T-cell (primary cell): ENCODE measurements at regions of chr19 and their contacts with region 1.

Region 1: DNA sequence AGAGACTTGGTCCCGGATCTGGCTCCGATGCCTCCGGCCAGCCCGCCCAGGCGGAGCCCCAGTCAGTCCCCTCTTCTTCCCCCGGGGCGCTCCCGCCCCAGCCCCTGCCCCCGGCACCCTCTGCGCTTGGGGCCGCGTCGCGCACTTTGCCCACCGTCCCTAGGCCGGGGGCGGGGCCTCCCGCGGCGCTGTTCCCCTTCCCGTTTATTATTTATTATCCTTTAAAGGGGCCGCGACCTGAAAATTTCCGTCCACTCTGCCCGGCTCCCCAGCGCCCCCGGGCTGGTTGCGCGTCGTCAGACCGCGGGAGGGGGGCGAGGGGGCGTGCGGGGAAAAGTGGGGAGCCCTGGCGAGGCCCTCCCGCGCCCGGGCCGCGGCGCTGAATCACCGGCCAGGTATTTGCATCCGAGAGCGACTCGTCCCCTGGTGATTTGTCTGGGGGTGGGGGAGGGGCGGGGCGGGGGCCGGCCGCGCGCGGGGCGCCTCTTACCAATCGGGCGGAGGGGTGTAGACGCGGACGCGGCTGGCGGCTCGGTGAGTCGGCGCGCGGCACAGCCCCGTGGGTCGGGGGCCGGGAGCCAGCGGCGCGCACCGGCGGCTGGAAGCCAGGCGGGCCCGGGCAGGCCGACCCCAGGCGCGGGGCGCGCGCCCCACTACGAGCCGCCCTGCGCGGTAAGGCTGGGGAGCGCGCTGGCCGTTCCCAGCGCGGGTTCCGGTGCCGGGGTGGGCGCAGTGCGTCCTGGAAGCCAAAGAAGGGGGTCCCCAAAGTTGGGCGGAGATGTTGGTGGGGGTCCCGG is at the start of gene ARID3A:
- DNase-seq: peak in 32 of 35 experiments; percentile 49 to 83 (median 65)
- ATAC-seq: peak; percentile 73 to 78 (median 77)
- H3K4me3 ChIP-seq: peak within 1 kb of the TSS; percentile 81 to 82
- H3K4me3 Mint-ChIP-seq: peak within 1 kb of the TSS; percentile 74 to 78 (median 78)
- H3K27ac ChIP-seq: peak within 1 kb of the TSS; percentile 65
- H3K27ac Mint-ChIP-seq: peak within 1 kb of the TSS; percentile 39 to 66
- H3K4me1 ChIP-seq: peaks cover 0 to 48% of the 10 kb centered on the region in 2 experiments
- H3K4me1 Mint-ChIP-seq: peaks cover 14 to 17% (median 17%) of the 10 kb centered on the region in 3 donors
- H3K27me3 ChIP-seq: no peaks in the 10 kb centered on the region
- H3K27me3 Mint-ChIP-seq: no peaks in the 10 kb centered on the region
- total RNA-seq, gene ARID3A: 9.8 to 13.2 (median 12.0) TPM

Region 2: GRCh38 chr19:892243-893050 is 33.3 kb before region 1 on chr19:
- CTCF ChIA-PET with region 1: no interaction called
- POLR2A ChIA-PET with region 1: no interaction called
- DNase-seq: peak in 3 of 35 experiments; percentile 14 to 39 (median 21)
- ATAC-seq: peak; percentile 41 to 66 (median 48)
- H3K4me3 ChIP-seq: peak overlapping the region; percentile 64 to 75
- H3K4me3 Mint-ChIP-seq: peak overlapping the region; percentile 78 to 87 (median 85)
- H3K27ac ChIP-seq: peak overlapping the region; percentile 67
- H3K27ac Mint-ChIP-seq: peak overlapping the region; percentile 79 to 100
- H3K4me1 ChIP-seq: peaks cover 0 to 53% of the 10 kb centered on the region in 2 experiments
- H3K4me1 Mint-ChIP-seq: peaks cover 14 to 54% (median 23%) of the 10 kb centered on the region in 3 donors
- H3K27me3 ChIP-seq: no peaks in the 10 kb centered on the region
- H3K27me3 Mint-ChIP-seq: peaks cover 0 to 4% of the 10 kb centered on the region in 2 donors

Region 3: GRCh38 chr19:913080-913748 is 12.5 kb before region 1 on chr19 and contains the start of gene R3HDM4:
- CTCF ChIA-PET with region 1: no interaction called
- POLR2A ChIA-PET with region 1: no interaction called
- DNase-seq: peak; percentile 66 to 91 (median 81)
- ATAC-seq: peak; percentile 58 to 63 (median 62)
- H3K4me3 ChIP-seq: peak within 1 kb of the TSS; percentile 75 to 97
- H3K4me3 Mint-ChIP-seq: peak within 1 kb of the TSS; percentile 79 to 85 (median 84)
- H3K27ac ChIP-seq: peak within 1 kb of the TSS; percentile 99
- H3K27ac Mint-ChIP-seq: peak within 1 kb of the TSS; percentile 95
- H3K4me1 ChIP-seq: peaks cover 26 to 72% of the 10 kb centered on the region in 2 experiments
- H3K4me1 Mint-ChIP-seq: peaks cover 28 to 41% (median 36%) of the 10 kb centered on the region in 3 donors
- H3K27me3 ChIP-seq: peaks cover 0 to 30% of the 10 kb centered on the region in 2 experiments
- H3K27me3 Mint-ChIP-seq: peaks cover 0 to 5% of the 10 kb centered on the region in 2 donors
- total RNA-seq, gene R3HDM4: 190 to 252 (median 220) TPM

Region 4: GRCh38 chr19:947265-948036 is 21.7 kb after region 1 on chr19:
- CTCF ChIA-PET with region 1: interaction called in 1 of 2 experiments, 11 read pairs
- POLR2A ChIA-PET with region 1: no interaction called
- DNase-seq: peak in 6 of 35 experiments; percentile 8 to 60 (median 22)
- ATAC-seq: peak in 1 of 4 experiments; percentile 46
- H3K4me3 ChIP-seq: no peak overlapping the region
- H3K4me3 Mint-ChIP-seq: no peak overlapping the region
- H3K27ac ChIP-seq: no peak overlapping the region
- H3K27ac Mint-ChIP-seq: no peak overlapping the region
- H3K4me1 ChIP-seq: peaks cover 0 to 7% of the 10 kb centered on the region in 2 experiments
- H3K4me1 Mint-ChIP-seq: peaks cover 0 to 6% (median 0%) of the 10 kb centered on the region in 3 donors
- H3K27me3 ChIP-seq: no peaks in the 10 kb centered on the region
- H3K27me3 Mint-ChIP-seq: no peaks in the 10 kb centered on the region

Region 5: GRCh38 chr19:984165-984967 is 58.6 kb after region 1 on chr19 and contains the start of gene WDR18:
- CTCF ChIA-PET with region 1: interaction called in 1 of 2 experiments, 25 read pairs
- POLR2A ChIA-PET with region 1: no interaction called
- DNase-seq: peak; percentile 52 to 92 (median 78)
- ATAC-seq: peak; percentile 84 to 94 (median 88)
- H3K4me3 ChIP-seq: peak within 1 kb of the TSS; percentile 68 to 98
- H3K4me3 Mint-ChIP-seq: peak within 1 kb of the TSS; percentile 93 to 98 (median 94)
- H3K27ac ChIP-seq: peak within 1 kb of the TSS; percentile 93
- H3K27ac Mint-ChIP-seq: peak within 1 kb of the TSS; percentile 87 to 89
- H3K4me1 ChIP-seq: peaks cover 10 to 39% of the 10 kb centered on the region in 2 experiments
- H3K4me1 Mint-ChIP-seq: peaks cover 13 to 21% (median 19%) of the 10 kb centered on the region in 3 donors
- H3K27me3 ChIP-seq: peaks cover 0 to 2% of the 10 kb centered on the region in 2 experiments
- H3K27me3 Mint-ChIP-seq: no peaks in the 10 kb centered on the region
- total RNA-seq, gene WDR18: 24.6 to 65.9 (median 53.5) TPM